Dorsolateral prefrontal cortex (tissue), 120 donors: ENCODE measurements at regions of chr3 and their contacts with region 1.

Region 1: GRCh38 chr3:48429960-48430707 is at the start of gene PLXNB1:
- DNase-seq: peak in 3 of 10 donors; percentile 19 to 43 (median 24)
- H3K4me3 ChIP-seq: peak within 1 kb of the TSS; percentile 61 to 94 (median 78)
- H3K27ac ChIP-seq: peak within 1 kb of the TSS; percentile 91 to 100 (median 97)
- H3K27me3 ChIP-seq: no peaks in the 10 kb centered on the region
- CTCF ChIP-seq: no peak
- total RNA-seq, gene PLXNB1: 88.5 to 492 (median 177) TPM

Region 2: DNA sequence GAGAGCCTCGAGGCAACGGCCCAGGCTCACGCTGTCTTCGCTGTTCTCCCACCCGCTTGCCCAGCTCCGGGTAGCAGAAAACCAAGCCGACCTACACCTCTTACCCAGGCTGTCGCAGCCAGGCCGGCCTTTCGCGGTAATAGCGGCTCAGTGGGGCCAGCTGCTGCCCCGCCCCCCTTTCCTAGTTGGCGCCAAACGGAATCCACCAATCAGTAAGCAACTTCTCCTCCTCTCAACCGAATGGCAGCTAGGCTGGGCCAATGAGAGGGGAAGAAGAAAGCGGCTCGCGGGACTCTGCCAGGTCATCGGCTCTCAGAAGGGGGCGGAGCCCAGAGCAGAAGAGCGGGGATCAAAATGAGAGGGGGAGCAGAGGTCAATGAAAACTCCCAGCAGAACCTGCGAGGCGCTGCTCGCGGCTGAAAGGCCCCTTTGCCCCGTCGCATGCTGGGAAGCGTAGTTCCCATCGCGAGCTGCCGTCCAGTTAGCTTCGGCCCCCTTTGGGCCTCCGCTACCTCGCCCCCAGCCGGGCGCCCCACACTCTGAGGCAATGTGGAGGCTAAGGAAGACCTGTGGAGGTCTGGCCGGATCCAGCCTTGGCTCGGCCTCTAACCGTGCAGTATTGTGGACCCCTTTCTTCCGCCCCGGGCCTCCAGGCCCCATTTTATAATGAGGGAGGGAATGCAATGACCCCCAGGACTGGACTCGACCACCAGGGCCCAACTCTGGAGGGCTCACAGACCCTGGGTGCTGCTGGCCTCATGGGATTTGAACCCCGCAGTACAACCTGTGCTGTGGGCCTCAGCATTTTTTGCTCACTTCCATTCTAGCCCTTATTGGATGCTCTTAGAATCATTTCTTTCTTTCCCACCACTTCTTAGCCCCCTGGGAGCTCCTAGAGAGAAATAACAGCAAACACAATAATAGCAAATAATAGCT is 241.6 kb before region 1 on chr3 and contains the start of gene CDC25A:
- intact Hi-C with region 1: loop called in 1 of 2 experiments (anchors 5 kb)
- DNase-seq: peak; percentile 90 to 97 (median 96)
- H3K4me3 ChIP-seq: peak within 1 kb of the TSS; percentile 55 to 97 (median 82)
- H3K27ac ChIP-seq: peak within 1 kb of the TSS in 52 of 59 donors; percentile 30 to 88 (median 78)
- H3K27me3 ChIP-seq: no peaks in the 10 kb centered on the region
- CTCF ChIP-seq: peak in 38 of 56 donors; percentile 4 to 62 (median 30)
- total RNA-seq, gene CDC25A: 0.18 to 3.9 (median 1.1) TPM

Region 3: GRCh38 chr3:48232734-48233133 is 197.4 kb before region 1 on chr3:
- intact Hi-C with region 1: loop called (anchors 5 kb)
- DNase-seq: peak; percentile 69 to 94 (median 84)
- H3K4me3 ChIP-seq: peak overlapping the region in 55 of 59 donors; percentile 6 to 66 (median 46)
- H3K27ac ChIP-seq: peak overlapping the region in 21 of 59 donors; percentile 3 to 58 (median 38)
- H3K27me3 ChIP-seq: no peaks in the 10 kb centered on the region
- CTCF ChIP-seq: peak in 55 of 56 donors; percentile 38 to 84 (median 70)

Region 4: GRCh38 chr3:48507351-48508061 is 77.4 kb after region 1 on chr3:
- intact Hi-C with region 1: no loop called
- DNase-seq: peak in 5 of 10 donors; percentile 13 to 43 (median 26)
- H3K4me3 ChIP-seq: no peak overlapping the region
- H3K27ac ChIP-seq: peak overlapping the region in 19 of 59 donors; percentile 3 to 53 (median 31)
- H3K27me3 ChIP-seq: no peaks in the 10 kb centered on the region
- CTCF ChIP-seq: peak in 45 of 56 donors; percentile 12 to 66 (median 38)